Activated CD8-positive, alpha-beta T cell treated with anti-CD3 and anti-CD28 coated beads, Interleukin-2, amount 10 ng/mL, durations not matched to agents 7 days and 5 days (primary cell): ENCODE measurements at regions of chr4 and their contacts with region 1.

Region 1: GRCh38 chr4:67909905-67910584 is 26.2 kb upstream of the TMPRSS11D start:
- DNase-seq: no peak
- ATAC-seq: no peak
- H3K4me3 Mint-ChIP-seq: no peak overlapping the region
- H3K27ac Mint-ChIP-seq: no peak overlapping the region
- H3K4me1 Mint-ChIP-seq: no peaks in the 10 kb centered on the region
- H3K27me3 Mint-ChIP-seq: peaks cover 12% of the 10 kb centered on the region

Region 2: GRCh38 chr4:67545199-67546003 is 364.6 kb before region 1 on chr4 and contains the start of gene CENPC:
- CTCF ChIA-PET with region 1: interaction called, 15 read pairs
- POLR2A ChIA-PET with region 1: no interaction called
- DNase-seq: peak; percentile 98
- ATAC-seq: peak; percentile 98
- H3K4me3 Mint-ChIP-seq: peak within 1 kb of the TSS; percentile 97
- H3K27ac Mint-ChIP-seq: peak within 1 kb of the TSS; percentile 97
- H3K4me1 Mint-ChIP-seq: peaks cover 37% of the 10 kb centered on the region
- H3K27me3 Mint-ChIP-seq: no peaks in the 10 kb centered on the region
- total RNA-seq, gene CENPC: 33.2 to 33.7 TPM

Region 3: DNA sequence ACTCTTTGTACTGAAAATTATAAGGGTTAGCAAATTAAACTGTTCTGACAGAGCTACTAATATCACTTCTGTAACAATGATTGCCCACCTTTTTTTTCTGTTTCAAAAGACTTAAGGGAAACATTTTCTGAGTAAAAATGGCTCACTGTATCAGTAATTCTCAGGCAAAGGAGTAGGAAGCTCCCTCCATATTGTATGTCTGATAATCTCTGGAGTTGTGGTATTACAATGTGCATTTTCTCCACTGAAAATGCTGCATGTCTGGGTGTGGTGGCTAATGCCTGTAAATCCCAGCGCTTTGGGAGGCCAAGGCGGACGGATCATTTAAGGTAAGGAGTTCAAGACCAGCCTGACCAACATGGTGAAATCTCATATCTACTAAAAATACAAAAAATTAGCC is 355.9 kb before region 1 on chr4:
- CTCF ChIA-PET with region 1: interaction called, 15 read pairs
- POLR2A ChIA-PET with region 1: no interaction called
- DNase-seq: no peak
- ATAC-seq: no peak
- H3K4me3 Mint-ChIP-seq: no peak overlapping the region
- H3K27ac Mint-ChIP-seq: no peak overlapping the region
- H3K4me1 Mint-ChIP-seq: peaks cover 36% of the 10 kb centered on the region
- H3K27me3 Mint-ChIP-seq: no peaks in the 10 kb centered on the region

Region 4: GRCh38 chr4:67632492-67632891 is 277.6 kb before region 1 on chr4:
- CTCF ChIA-PET with region 1: no interaction called
- POLR2A ChIA-PET with region 1: no interaction called
- DNase-seq: no peak
- ATAC-seq: no peak
- H3K4me3 Mint-ChIP-seq: no peak overlapping the region
- H3K27ac Mint-ChIP-seq: no peak overlapping the region
- H3K4me1 Mint-ChIP-seq: peaks cover 2% of the 10 kb centered on the region
- H3K27me3 Mint-ChIP-seq: no peaks in the 10 kb centered on the region

Region 5: GRCh38 chr4:67899096-67899495 is 10.9 kb before region 1 on chr4:
- CTCF ChIA-PET with region 1: interaction called, 20 read pairs
- POLR2A ChIA-PET with region 1: no interaction called
- DNase-seq: no peak
- ATAC-seq: no peak
- H3K4me3 Mint-ChIP-seq: no peak overlapping the region
- H3K27ac Mint-ChIP-seq: no peak overlapping the region
- H3K4me1 Mint-ChIP-seq: no peaks in the 10 kb centered on the region
- H3K27me3 Mint-ChIP-seq: peaks cover 1% of the 10 kb centered on the region